CD8-positive, alpha-beta memory T cell (primary cell): ENCODE measurements at regions of chr5 and their contacts with region 1.

Region 1: GRCh38 chr5:94524841-94525697 is 93.3 kb downstream of the KIAA0825 start:
- DNase-seq: peak in 2 of 5 donors; percentile 17 to 41
- H3K4me3 ChIP-seq: no peak overlapping the region
- H3K4me3 Mint-ChIP-seq: no peak overlapping the region
- H3K27ac ChIP-seq: no peak overlapping the region
- H3K27ac Mint-ChIP-seq: no peak overlapping the region
- H3K4me1 ChIP-seq: no peaks in the 10 kb centered on the region
- H3K4me1 Mint-ChIP-seq: peaks cover 3 to 11% (median 11%) of the 10 kb centered on the region in 3 donors
- H3K27me3 ChIP-seq: no peaks in the 10 kb centered on the region
- H3K27me3 Mint-ChIP-seq: no peaks in the 10 kb centered on the region

Region 2: GRCh38 chr5:94420885-94421284 is 104.2 kb before region 1 on chr5:
- CTCF ChIA-PET with region 1: no interaction called
- POLR2A ChIA-PET with region 1: no interaction called
- DNase-seq: no peak
- H3K4me3 ChIP-seq: no peak overlapping the region
- H3K4me3 Mint-ChIP-seq: no peak overlapping the region
- H3K27ac ChIP-seq: no peak overlapping the region
- H3K27ac Mint-ChIP-seq: peak overlapping the region in 1 of 8 donors; percentile 85
- H3K4me1 ChIP-seq: no peaks in the 10 kb centered on the region
- H3K4me1 Mint-ChIP-seq: peaks cover 0 to 7% (median 0%) of the 10 kb centered on the region in 3 donors
- H3K27me3 ChIP-seq: no peaks in the 10 kb centered on the region
- H3K27me3 Mint-ChIP-seq: no peaks in the 10 kb centered on the region

Region 3: GRCh38 chr5:94618493-94619328 is 93.6 kb after region 1 on chr5 and contains the starts of genes KIAA0825 and SLF1:
- CTCF ChIA-PET with region 1: interaction called, 11 read pairs
- POLR2A ChIA-PET with region 1: no interaction called
- DNase-seq: peak; percentile 78 to 89 (median 82)
- H3K4me3 ChIP-seq: peak within 1 kb of the TSS; percentile 89
- H3K4me3 Mint-ChIP-seq: peak within 1 kb of the TSS; percentile 88 to 98 (median 95)
- H3K27ac ChIP-seq: peak within 1 kb of the TSS; percentile 72
- H3K27ac Mint-ChIP-seq: peak within 1 kb of the TSS; percentile 89 to 97 (median 94)
- H3K4me1 ChIP-seq: peaks cover 31% of the 10 kb centered on the region
- H3K4me1 Mint-ChIP-seq: peaks cover 51 to 76% (median 71%) of the 10 kb centered on the region in 3 donors
- H3K27me3 ChIP-seq: no peaks in the 10 kb centered on the region
- H3K27me3 Mint-ChIP-seq: no peaks in the 10 kb centered on the region
- total RNA-seq, gene KIAA0825: 1.4 to 1.5 TPM
- total RNA-seq, gene SLF1: 12.2 to 14.0 TPM

Region 4: GRCh38 chr5:94740286-94740685 is 215.2 kb after region 1 on chr5:
- CTCF ChIA-PET with region 1: interaction called, 28 read pairs
- POLR2A ChIA-PET with region 1: no interaction called
- DNase-seq: no peak
- H3K4me3 ChIP-seq: no peak overlapping the region
- H3K4me3 Mint-ChIP-seq: no peak overlapping the region
- H3K27ac ChIP-seq: no peak overlapping the region
- H3K27ac Mint-ChIP-seq: no peak overlapping the region
- H3K4me1 ChIP-seq: peaks cover 4% of the 10 kb centered on the region
- H3K4me1 Mint-ChIP-seq: no peaks in the 10 kb centered on the region
- H3K27me3 ChIP-seq: no peaks in the 10 kb centered on the region
- H3K27me3 Mint-ChIP-seq: peaks cover 0 to 4% of the 10 kb centered on the region in 2 donors